ENCODE measurements at regions of chr1 and their contacts with region 1.

Region 1: DNA sequence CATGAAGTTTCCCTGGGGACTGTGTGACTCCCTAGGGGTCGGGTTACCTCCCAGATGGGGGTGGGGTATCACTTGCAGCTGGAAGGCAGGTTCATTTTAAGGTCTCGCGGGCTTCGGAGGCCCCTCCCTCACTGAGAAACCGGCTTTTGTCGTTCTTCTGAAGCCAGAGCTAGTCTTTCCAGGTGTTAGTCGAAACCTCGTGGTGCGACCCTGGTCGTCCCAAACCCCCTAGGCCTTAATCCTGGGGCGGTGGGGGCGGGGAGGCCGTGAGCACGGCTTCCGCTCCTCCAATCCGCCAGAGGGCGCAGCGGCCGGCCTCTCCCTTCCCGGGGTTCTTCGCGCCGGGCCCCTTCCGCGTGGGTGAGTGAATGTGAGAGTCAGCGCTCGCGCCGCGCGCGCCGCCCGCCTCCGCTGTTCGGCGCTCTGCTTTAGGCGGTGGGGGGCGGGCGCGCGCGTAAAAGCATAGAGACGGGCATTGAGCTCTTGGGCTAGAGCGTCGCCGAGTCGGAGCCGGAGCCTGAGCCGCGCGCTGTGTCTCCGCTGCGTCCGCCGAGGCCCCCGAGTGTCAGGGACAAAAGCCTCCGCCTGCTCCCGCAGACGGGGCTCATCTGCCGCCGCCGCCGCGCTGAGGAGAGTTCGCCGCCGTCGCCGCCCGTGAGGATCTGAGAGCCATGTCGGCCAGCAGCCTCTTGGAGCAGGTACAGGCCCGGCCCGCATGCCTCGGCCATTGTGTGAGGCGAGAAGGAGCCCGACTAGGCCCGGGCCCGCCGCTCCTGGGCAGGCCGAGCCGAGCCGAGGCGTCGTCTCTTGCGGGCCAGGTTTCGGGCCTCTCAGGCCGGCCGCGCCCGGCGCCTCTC is at the start of gene YTHDF2:
- DNase-seq: peak; percentile 95 to 98 (median 98)
- ATAC-seq: peak; percentile 97
- H3K4me3 ChIP-seq: peak within 1 kb of the TSS; percentile 88
- H3K4me3 Mint-ChIP-seq: peak within 1 kb of the TSS; percentile 92 to 100 (median 98)
- H3K27ac ChIP-seq: peak within 1 kb of the TSS; percentile 92
- H3K27ac Mint-ChIP-seq: peak within 1 kb of the TSS; percentile 93 to 98 (median 95)
- H3K4me1 ChIP-seq: peaks cover 26% of the 10 kb centered on the region in 2 donors
- H3K4me1 Mint-ChIP-seq: peaks cover 15 to 49% (median 34%) of the 10 kb centered on the region in 7 donors
- H3K27me3 ChIP-seq: no peaks in the 10 kb centered on the region
- H3K27me3 Mint-ChIP-seq: no peaks in the 10 kb centered on the region
- total RNA-seq, gene YTHDF2: 64.5 to 72.0 (median 71.5) TPM

Region 2: GRCh38 chr1:27300341-27301051 is 1436.2 kb before region 1 on chr1:
- CTCF ChIA-PET with region 1: interaction called, 10 read pairs
- POLR2A ChIA-PET with region 1: no interaction called
- intact Hi-C with region 1: no loop called
- DNase-seq: peak; percentile 66 to 84 (median 76)
- ATAC-seq: peak; percentile 95
- H3K4me3 ChIP-seq: no peak overlapping the region
- H3K4me3 Mint-ChIP-seq: no peak overlapping the region
- H3K27ac ChIP-seq: no peak overlapping the region
- H3K27ac Mint-ChIP-seq: no peak overlapping the region
- H3K4me1 ChIP-seq: no peaks in the 10 kb centered on the region
- H3K4me1 Mint-ChIP-seq: peaks cover 0 to 9% (median 3%) of the 10 kb centered on the region in 7 donors
- H3K27me3 ChIP-seq: no peaks in the 10 kb centered on the region
- H3K27me3 Mint-ChIP-seq: no peaks in the 10 kb centered on the region

Region 3: DNA sequence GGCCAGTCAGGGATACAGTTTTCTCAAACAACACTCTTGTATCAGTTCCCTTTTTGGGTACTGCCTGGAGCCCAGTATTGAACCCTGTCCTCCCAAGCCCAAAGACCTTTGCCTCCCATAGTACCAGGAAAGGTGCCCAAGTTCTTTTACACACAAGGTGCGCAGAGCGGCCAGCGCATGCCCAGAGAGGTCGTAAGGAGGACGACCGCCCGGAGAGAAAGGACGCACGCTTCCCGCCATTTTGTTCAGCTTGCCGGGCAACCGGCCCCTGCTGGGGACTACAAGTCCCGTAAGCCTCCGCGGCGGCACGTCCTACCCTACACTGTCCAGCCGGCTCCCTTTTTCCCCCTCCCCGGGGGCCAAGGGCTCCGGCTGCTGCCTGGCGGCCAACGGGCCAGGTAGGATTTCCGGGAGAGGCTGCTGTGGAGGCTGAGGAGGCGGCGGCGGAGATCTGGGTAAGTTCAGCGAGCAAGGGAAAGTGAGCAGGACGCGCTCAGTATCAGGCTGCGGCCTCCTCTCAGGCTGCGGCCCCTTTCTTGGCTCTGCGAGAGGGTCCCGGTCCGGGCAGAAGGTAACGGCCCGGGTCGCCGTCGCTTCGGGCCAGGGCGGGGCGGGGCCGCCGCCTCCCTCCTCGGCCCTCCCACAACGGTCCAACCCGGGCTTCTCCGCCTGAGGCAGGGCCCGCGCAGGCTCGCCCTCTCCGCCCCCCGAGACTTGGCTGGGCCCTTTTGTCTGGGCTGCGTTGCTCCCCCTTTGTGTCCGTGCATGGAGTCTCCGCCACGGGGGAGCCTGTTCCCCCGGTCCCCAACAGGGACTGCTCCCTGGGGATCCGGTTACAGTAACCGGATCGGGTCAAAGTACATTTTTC is 367.1 kb before region 1 on chr1 and contains the start of gene PHACTR4:
- CTCF ChIA-PET with region 1: interaction called, 3 read pairs
- POLR2A ChIA-PET with region 1: no interaction called
- intact Hi-C with region 1: loop called in 1 of 2 experiments (anchors 1 kb)
- DNase-seq: peak; percentile 54 to 81 (median 66)
- ATAC-seq: peak; percentile 96
- H3K4me3 ChIP-seq: peak within 1 kb of the TSS; percentile 74
- H3K4me3 Mint-ChIP-seq: peak within 1 kb of the TSS; percentile 82 to 98 (median 94)
- H3K27ac ChIP-seq: peak within 1 kb of the TSS; percentile 79
- H3K27ac Mint-ChIP-seq: peak within 1 kb of the TSS; percentile 88 to 99 (median 91)
- H3K4me1 ChIP-seq: peaks cover 10 to 11% of the 10 kb centered on the region in 2 donors
- H3K4me1 Mint-ChIP-seq: peaks cover 11 to 40% (median 35%) of the 10 kb centered on the region in 7 donors
- H3K27me3 ChIP-seq: no peaks in the 10 kb centered on the region
- H3K27me3 Mint-ChIP-seq: peaks cover 0 to 2% (median 0%) of the 10 kb centered on the region in 5 donors
- total RNA-seq, gene PHACTR4: 19.8 to 29.0 (median 25.7) TPM

Region 4: DNA sequence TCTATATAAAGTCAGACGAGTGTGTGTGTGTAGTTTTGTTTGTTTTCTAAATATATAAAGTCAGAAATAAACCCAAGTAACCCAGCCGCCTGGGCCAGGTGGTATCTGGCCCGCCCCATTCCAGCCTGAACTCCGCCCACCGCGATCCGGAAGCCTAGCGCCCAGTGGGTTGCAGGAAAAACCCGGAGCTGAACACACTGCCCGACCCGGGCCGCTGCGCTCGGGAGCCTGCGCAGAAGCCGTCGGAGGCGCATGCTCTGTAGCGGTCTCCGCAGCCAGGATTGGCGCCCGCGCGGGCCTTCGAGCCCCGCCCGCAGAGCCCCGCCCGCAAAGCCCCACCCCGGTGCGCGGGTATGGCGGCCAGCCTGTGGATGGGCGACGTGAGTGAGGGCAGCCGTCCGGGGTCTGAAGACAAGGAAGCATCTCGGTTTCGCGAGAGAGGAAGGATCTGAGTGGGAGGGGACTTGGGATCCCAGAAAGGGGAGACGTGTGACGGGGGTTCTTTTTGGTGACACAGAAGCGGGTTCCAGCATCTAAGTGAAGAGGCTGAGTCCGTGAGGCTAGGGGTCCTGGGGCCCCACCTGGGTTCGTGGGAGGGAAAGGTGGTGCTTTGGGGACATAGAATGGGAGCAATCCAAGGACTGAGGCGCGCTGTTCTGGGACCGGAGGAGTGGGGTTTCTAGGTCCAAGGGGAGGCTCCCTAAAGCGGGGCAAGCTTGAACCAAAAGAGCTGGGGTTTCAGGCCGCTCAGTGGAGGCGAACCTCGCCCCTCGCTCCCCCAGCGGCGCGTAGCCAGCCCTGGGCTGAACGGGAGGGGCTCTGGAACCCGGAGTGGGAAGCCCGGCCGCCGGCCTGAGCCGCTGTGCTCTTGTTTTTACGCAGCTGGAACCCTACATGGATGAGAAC is 183.7 kb before region 1 on chr1 and contains the start of gene TRNAU1AP:
- CTCF ChIA-PET with region 1: no interaction called
- POLR2A ChIA-PET with region 1: interaction called, 4 read pairs
- intact Hi-C with region 1: loop called in 1 of 2 experiments (anchors 1 kb)
- DNase-seq: peak; percentile 92 to 98 (median 97)
- ATAC-seq: peak; percentile 98
- H3K4me3 ChIP-seq: peak within 1 kb of the TSS; percentile 95
- H3K4me3 Mint-ChIP-seq: peak within 1 kb of the TSS; percentile 94 to 99 (median 98)
- H3K27ac ChIP-seq: peak within 1 kb of the TSS; percentile 81
- H3K27ac Mint-ChIP-seq: peak within 1 kb of the TSS; percentile 94 to 99 (median 98)
- H3K4me1 ChIP-seq: peaks cover 0 to 15% of the 10 kb centered on the region in 2 donors
- H3K4me1 Mint-ChIP-seq: peaks cover 10 to 26% (median 19%) of the 10 kb centered on the region in 7 donors
- H3K27me3 ChIP-seq: no peaks in the 10 kb centered on the region
- H3K27me3 Mint-ChIP-seq: no peaks in the 10 kb centered on the region
- total RNA-seq, gene TRNAU1AP: 27.6 to 52.5 (median 40.9) TPM

Region 5: GRCh38 chr1:28648474-28649198 is 88.0 kb before region 1 on chr1 and contains the start of gene RNU11:
- CTCF ChIA-PET with region 1: interaction called, 16 read pairs
- POLR2A ChIA-PET with region 1: interaction called, 156 read pairs
- intact Hi-C with region 1: loop called (anchors 1 kb)
- DNase-seq: peak in 8 of 9 donors; percentile 67 to 97 (median 91)
- ATAC-seq: peak; percentile 86
- H3K4me3 ChIP-seq: peak within 1 kb of the TSS; percentile 60
- H3K4me3 Mint-ChIP-seq: peak within 1 kb of the TSS; percentile 70 to 96 (median 90)
- H3K27ac ChIP-seq: peak within 1 kb of the TSS; percentile 93
- H3K27ac Mint-ChIP-seq: peak within 1 kb of the TSS; percentile 97 to 100 (median 99)
- H3K4me1 ChIP-seq: peaks cover 25 to 27% of the 10 kb centered on the region in 2 donors
- H3K4me1 Mint-ChIP-seq: peaks cover 14 to 39% (median 31%) of the 10 kb centered on the region in 7 donors
- H3K27me3 ChIP-seq: no peaks in the 10 kb centered on the region
- H3K27me3 Mint-ChIP-seq: no peaks in the 10 kb centered on the region
- total RNA-seq, gene RNU11: not detected

Region 6: DNA sequence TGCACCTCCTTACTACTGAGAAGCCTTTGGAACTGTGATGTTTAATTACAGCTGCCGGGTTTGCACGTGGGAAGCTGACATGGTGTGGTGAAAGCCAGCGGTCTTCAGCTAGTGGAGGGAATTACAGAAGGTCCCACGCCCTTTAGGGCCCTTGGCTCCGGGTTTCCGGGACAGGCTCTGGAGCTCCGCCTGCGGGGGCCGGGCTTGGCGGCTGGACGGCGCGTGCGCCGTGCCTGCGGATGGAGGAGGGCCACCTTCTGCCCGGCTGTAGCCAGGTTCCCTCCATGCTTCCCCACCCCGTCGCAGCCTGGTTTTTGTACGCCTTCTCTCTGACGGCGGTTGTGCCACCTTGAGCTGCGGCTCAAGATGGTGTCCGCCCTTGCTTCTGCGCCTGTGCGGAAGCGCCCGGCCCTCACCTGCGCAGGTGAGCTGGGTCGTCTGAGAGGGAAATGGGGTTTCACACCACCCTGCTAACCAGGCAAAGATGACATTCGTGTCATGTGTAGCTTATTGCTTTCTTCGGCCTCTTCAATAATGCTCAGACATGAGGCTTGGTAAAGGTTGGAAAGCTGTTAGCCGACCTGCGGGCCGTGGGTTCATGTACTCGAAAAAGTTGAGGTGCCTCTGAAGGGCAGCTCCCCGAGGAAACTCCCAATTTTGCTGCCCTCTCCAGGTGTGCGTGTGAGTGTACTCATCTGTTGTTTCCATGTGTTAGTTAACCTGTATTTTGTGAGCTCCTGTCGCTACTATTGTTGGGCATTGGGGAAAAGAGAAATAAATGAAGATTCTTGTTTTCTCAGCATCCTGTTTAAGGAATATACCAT is 38.7 kb after region 1 on chr1:
- CTCF ChIA-PET with region 1: interaction called, 7 read pairs
- POLR2A ChIA-PET with region 1: interaction called, 26 read pairs
- intact Hi-C with region 1: loop called in 1 of 2 experiments (anchors 5 kb)
- DNase-seq: peak; percentile 52 to 77 (median 68)
- ATAC-seq: peak; percentile 91
- H3K4me3 ChIP-seq: peak overlapping the region; percentile 63
- H3K4me3 Mint-ChIP-seq: peak overlapping the region; percentile 79 to 88 (median 84)
- H3K27ac ChIP-seq: peak overlapping the region; percentile 52
- H3K27ac Mint-ChIP-seq: peak overlapping the region; percentile 23 to 94 (median 87)
- H3K4me1 ChIP-seq: peaks cover 6 to 8% of the 10 kb centered on the region in 2 donors
- H3K4me1 Mint-ChIP-seq: peaks cover 0 to 14% (median 12%) of the 10 kb centered on the region in 7 donors
- H3K27me3 ChIP-seq: no peaks in the 10 kb centered on the region
- H3K27me3 Mint-ChIP-seq: peaks cover 0 to 5% (median 0%) of the 10 kb centered on the region in 5 donors

Region 7: DNA sequence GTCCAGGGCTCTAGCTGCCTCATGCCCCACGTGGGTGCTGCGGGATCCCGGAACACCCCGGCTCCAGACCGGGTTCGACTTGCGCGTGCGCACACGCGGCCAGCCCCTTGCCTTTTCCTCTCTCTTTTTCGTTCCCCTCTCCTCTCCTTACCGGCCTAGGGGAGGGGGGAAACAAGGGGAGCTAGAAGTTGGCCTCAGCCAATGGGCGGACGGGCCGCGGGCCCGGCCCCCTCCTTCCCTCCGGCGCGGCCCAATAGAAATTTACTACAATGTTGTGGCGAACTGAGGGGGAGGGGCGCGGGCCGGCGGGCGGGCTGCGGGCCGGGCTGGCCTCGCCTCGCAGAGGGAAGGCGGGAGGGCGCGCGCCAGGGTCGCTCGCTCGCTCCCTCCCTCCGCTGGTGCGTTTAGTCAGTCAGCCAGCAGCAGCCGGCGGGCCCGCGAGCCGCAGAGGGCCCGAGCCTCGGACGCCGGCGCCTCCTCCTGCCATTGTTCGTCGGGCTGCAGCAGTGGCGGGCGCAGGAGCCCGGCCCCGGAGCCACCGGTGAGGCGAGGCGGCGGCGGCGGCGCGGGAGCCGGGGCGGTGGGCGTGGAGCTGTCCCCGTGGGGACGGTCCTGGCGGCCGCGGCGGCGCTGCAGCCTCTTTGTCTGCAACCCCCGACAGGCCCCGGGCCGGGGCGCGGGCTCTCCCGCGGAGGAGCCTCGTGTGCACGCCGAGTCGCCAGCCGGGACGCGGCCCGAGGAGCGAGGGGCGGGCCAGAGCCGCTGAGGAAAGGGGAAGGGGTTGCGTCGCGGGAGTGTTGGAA is 177.8 kb after region 1 on chr1 and contains the start of gene EPB41:
- CTCF ChIA-PET with region 1: no interaction called
- POLR2A ChIA-PET with region 1: no interaction called
- intact Hi-C with region 1: no loop called
- DNase-seq: peak; percentile 81 to 94 (median 87)
- ATAC-seq: peak; percentile 94
- H3K4me3 ChIP-seq: peak within 1 kb of the TSS; percentile 91
- H3K4me3 Mint-ChIP-seq: peak within 1 kb of the TSS; percentile 95 to 100 (median 99)
- H3K27ac ChIP-seq: peak within 1 kb of the TSS; percentile 73
- H3K27ac Mint-ChIP-seq: peak within 1 kb of the TSS; percentile 87 to 97 (median 96)
- H3K4me1 ChIP-seq: peaks cover 34 to 37% of the 10 kb centered on the region in 2 donors
- H3K4me1 Mint-ChIP-seq: peaks cover 32 to 51% (median 39%) of the 10 kb centered on the region in 7 donors
- H3K27me3 ChIP-seq: no peaks in the 10 kb centered on the region
- H3K27me3 Mint-ChIP-seq: no peaks in the 10 kb centered on the region
- total RNA-seq, gene EPB41: 150 to 325 (median 175) TPM

Region 8: GRCh38 chr1:28926629-28927265 is 190.1 kb after region 1 on chr1:
- CTCF ChIA-PET with region 1: no interaction called
- POLR2A ChIA-PET with region 1: no interaction called
- intact Hi-C with region 1: loop called in 1 of 2 experiments (anchors 5 kb)
- DNase-seq: peak in 7 of 9 donors; percentile 61 to 85 (median 80)
- ATAC-seq: peak; percentile 93
- H3K4me3 ChIP-seq: peak overlapping the region; percentile 24
- H3K4me3 Mint-ChIP-seq: peak overlapping the region; percentile 54 to 91 (median 76)
- H3K27ac ChIP-seq: peak overlapping the region; percentile 69
- H3K27ac Mint-ChIP-seq: peak overlapping the region; percentile 65 to 98 (median 91)
- H3K4me1 ChIP-seq: peaks cover 53 to 54% of the 10 kb centered on the region in 2 donors
- H3K4me1 Mint-ChIP-seq: peaks cover 46 to 85% (median 55%) of the 10 kb centered on the region in 7 donors
- H3K27me3 ChIP-seq: no peaks in the 10 kb centered on the region
- H3K27me3 Mint-ChIP-seq: no peaks in the 10 kb centered on the region